Testis (tissue), 5 donors: ENCODE measurements at regions of chr3 and their contacts with region 1.

Region 1: GRCh38 chr3:190321789-190322603 is at the start of gene CLDN1:
- DNase-seq: peak; percentile 93
- H3K4me3 ChIP-seq: peak within 1 kb of the TSS; percentile 60 to 76
- H3K27ac ChIP-seq: peak within 1 kb of the TSS; percentile 48 to 49
- H3K4me1 ChIP-seq: peaks cover 2% of the 10 kb centered on the region
- H3K27me3 ChIP-seq: no peaks in the 10 kb centered on the region
- CTCF ChIP-seq: peak; percentile 90 to 97 (median 92)
- POLR2A ChIP-seq: no peak
- total RNA-seq, gene CLDN1: 5.7 to 37.5 TPM

Region 2: GRCh38 chr3:190224863-190225692 is 96.9 kb before region 1 on chr3:
- intact Hi-C with region 1: loop called (anchors 10 kb)
- DNase-seq: no peak
- H3K4me3 ChIP-seq: no peak overlapping the region
- H3K27ac ChIP-seq: no peak overlapping the region
- H3K4me1 ChIP-seq: no peaks in the 10 kb centered on the region
- H3K27me3 ChIP-seq: no peaks in the 10 kb centered on the region
- CTCF ChIP-seq: peak; percentile 24 to 41 (median 25)
- POLR2A ChIP-seq: no peak

Region 3: DNA sequence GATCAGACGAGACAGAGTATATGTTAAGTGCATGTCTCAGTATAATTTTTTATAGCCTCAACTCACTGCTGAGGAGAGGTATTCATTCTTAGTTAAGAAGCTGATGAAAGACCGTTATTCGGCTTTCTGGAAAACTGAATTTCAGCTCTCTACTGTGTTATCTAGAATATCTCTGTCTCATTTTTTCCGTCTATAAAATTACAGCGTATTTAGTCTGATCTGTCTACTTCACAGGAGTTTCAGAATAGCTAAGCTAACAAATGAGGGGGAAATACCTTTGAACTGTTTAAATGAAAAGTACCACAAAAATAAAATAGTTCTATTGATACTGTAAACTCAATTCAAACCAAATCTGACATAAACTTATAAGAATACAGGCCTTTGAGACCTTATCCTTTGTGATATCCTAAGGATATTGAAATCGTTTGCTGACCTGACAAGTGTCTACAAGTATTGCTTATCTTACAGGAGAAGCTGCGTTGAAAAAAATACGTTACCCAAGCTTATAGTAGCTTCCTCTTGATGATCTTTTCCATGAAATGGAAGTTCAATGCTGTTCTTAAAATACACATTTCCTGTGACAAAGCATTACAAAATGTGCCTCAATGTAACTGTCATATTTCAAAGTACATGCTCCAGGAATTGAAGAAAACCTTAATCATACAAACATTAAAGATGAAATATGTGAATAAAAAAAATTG is 296.5 kb after region 1 on chr3:
- intact Hi-C with region 1: no loop called
- DNase-seq: no peak
- H3K4me3 ChIP-seq: no peak overlapping the region
- H3K27ac ChIP-seq: no peak overlapping the region
- H3K4me1 ChIP-seq: no peaks in the 10 kb centered on the region
- H3K27me3 ChIP-seq: no peaks in the 10 kb centered on the region
- CTCF ChIP-seq: no peak
- POLR2A ChIP-seq: no peak